IMR-90 (cell line): ENCODE measurements at regions of chr2 and their contacts with region 1.

Region 1: DNA sequence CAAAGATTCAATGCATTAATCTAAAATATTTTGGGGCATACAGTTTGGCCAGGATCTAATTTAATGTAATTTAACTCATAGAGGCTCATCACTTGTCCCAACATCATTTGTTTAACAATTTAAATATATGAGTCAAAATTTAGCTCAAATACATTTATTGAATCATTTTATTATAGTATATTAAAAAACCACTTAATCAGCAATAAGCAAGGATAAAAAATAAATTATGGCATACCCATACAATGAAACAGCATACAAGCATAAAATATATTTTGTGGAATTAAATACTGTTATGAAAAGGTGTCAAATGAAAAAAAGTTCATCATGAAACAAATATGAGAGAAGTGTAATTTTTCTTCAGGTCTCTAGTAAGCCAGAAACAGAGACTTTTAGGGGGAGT is 34.9 kb downstream of the LRPPRC start:
- DNase-seq: no peak
- ATAC-seq: no peak
- H3K4me3 ChIP-seq: no peak overlapping the region
- H3K27ac ChIP-seq: no peak overlapping the region
- H3K4me1 ChIP-seq: no peaks in the 10 kb centered on the region
- H3K27me3 ChIP-seq: no peaks in the 10 kb centered on the region
- CTCF ChIP-seq: no peak
- POLR2A ChIP-seq: no peak
- RAD21 ChIP-seq: no peak

Region 2: DNA sequence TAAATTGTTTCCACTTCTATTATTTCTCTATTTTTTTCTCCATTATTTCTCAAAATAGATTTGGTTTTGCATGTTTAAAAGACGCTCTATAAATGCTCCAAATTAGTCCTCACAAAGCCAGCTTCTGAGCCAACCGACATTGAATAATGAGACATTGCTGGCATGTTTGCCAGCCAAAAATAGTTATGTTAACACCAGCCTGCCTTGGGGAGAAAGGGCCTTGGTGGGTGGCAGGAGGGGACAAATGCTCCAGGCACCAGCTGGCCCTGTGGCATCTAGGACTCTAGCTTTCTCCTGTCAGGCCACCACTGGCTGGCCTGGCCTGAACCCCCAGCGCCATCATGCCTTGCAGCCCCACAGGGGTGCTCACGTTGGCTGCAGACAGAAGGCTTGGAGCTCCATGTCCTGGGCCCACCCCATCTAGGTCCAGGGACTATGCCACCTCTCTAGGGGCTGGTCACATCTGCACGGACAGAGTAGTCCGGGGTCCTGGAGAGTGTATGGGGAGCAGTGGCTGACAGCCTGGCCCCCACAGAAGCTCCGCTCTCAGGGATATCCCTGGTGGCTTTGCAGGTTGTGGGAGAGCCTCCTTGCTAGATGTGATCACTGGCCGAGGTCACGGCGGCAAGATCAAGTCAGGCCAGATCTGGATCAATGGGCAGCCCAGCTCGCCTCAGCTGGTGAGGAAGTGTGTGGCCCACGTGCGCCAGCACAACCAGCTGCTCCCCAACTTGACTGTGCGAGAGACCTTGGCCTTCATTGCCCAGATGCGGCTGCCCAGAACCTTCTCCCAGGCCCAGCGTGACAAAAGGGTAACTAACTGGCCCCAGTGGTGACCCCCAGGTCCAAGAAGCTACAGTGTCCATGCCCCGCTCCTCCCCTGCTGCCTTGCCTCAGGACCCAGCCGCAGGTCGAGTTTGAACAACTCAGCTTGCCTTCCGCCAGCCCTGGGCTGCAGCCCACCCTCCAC is 109.6 kb before region 1 on chr2:
- CTCF ChIA-PET with region 1: no interaction called
- POLR2A ChIA-PET with region 1: no interaction called
- dilution Hi-C with region 1: no loop called
- in situ Hi-C with region 1: no loop called
- intact Hi-C with region 1: no loop called
- DNase-seq: no peak
- ATAC-seq: no peak
- H3K4me3 ChIP-seq: no peak overlapping the region
- H3K27ac ChIP-seq: no peak overlapping the region
- H3K4me1 ChIP-seq: no peaks in the 10 kb centered on the region
- H3K27me3 ChIP-seq: peaks cover 39% of the 10 kb centered on the region
- CTCF ChIP-seq: no peak
- POLR2A ChIP-seq: no peak
- RAD21 ChIP-seq: no peak

Region 3: DNA sequence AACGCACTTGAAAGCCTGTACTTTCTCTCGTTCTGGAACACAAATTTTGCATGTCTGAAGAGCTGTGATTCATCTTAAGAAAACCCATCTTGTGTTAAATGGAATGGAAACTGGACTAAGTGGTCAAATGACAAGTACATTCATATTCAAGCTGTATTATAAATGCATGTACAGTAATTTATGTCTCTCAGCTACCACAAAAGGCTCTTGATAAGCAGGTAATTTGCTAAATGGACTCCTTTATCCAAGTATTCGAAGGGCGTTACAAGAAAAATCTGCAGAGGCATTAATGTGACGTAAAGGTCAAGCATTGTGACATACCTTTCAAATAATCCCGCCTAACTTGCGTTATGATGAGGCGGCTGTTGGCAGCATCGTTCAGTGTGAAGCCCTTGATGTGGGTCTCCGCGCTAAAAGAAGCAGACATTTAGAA is 55.5 kb before region 1 on chr2:
- CTCF ChIA-PET with region 1: no interaction called
- POLR2A ChIA-PET with region 1: no interaction called
- dilution Hi-C with region 1: no loop called
- in situ Hi-C with region 1: no loop called
- intact Hi-C with region 1: loop called (anchors 10 kb)
- DNase-seq: no peak
- ATAC-seq: no peak
- H3K4me3 ChIP-seq: no peak overlapping the region
- H3K27ac ChIP-seq: no peak overlapping the region
- H3K4me1 ChIP-seq: no peaks in the 10 kb centered on the region; the same call in 1 of the 2 replicates
- H3K27me3 ChIP-seq: no peaks in the 10 kb centered on the region
- CTCF ChIP-seq: no peak
- POLR2A ChIP-seq: no peak
- RAD21 ChIP-seq: no peak

Region 4: GRCh38 chr2:43927442-43927841 is 33.5 kb before region 1 on chr2:
- CTCF ChIA-PET with region 1: no interaction called
- POLR2A ChIA-PET with region 1: no interaction called
- dilution Hi-C with region 1: no loop called
- in situ Hi-C with region 1: no loop called
- intact Hi-C with region 1: loop called (anchors 5 kb)
- DNase-seq: no peak
- ATAC-seq: no peak
- H3K4me3 ChIP-seq: no peak overlapping the region
- H3K27ac ChIP-seq: no peak overlapping the region
- H3K4me1 ChIP-seq: no peaks in the 10 kb centered on the region
- H3K27me3 ChIP-seq: no peaks in the 10 kb centered on the region
- CTCF ChIP-seq: no peak
- POLR2A ChIP-seq: no peak
- RAD21 ChIP-seq: no peak